Naive thymus-derived CD4-positive, alpha-beta T cell (primary cell): ENCODE measurements at regions of chr22 and their contacts with region 1.

Region 1: GRCh38 chr22:20606041-20606783 is 98.8 kb downstream of the MED15 start:
- DNase-seq: peak; percentile 47 to 74 (median 71)
- ATAC-seq: peak; percentile 90
- H3K4me3 ChIP-seq: no peak overlapping the region
- H3K4me3 Mint-ChIP-seq: peak overlapping the region in 5 of 10 donors; percentile 17 to 69 (median 42)
- H3K27ac ChIP-seq: no peak overlapping the region
- H3K27ac Mint-ChIP-seq: peak overlapping the region in 4 of 9 donors; percentile 22 to 76 (median 29)
- H3K4me1 ChIP-seq: peaks cover 5 to 10% of the 10 kb centered on the region in 2 donors
- H3K4me1 Mint-ChIP-seq: peaks cover 3 to 25% (median 17%) of the 10 kb centered on the region in 7 donors
- H3K27me3 ChIP-seq: no peaks in the 10 kb centered on the region
- H3K27me3 Mint-ChIP-seq: peaks cover 0 to 2% (median 0%) of the 10 kb centered on the region in 5 donors

Region 2: DNA sequence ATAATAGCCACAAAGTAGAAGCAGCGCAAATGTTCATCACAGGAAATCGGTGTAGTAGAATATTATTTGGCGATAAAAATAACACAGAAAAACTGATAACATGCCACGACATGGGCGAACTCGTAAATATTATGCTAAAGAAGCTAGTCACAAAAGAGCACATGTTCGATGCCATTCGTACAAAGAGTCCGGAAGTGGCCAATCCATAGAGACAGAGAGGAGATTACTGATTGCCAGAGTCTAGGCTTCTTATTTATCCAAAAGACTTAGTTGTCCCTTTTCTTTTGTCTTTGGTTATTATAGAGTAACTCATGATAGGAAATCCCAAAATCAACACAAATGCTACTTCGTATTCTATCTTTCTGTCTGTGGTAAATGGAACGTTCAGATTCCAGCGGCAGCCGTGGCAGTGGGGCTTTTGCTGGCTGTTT is 42.3 kb before region 1 on chr22:
- CTCF ChIA-PET with region 1: interaction called, 6 read pairs
- POLR2A ChIA-PET with region 1: interaction called, 3 read pairs
- intact Hi-C with region 1: loop called in 1 of 2 experiments (anchors 1 kb)
- DNase-seq: no peak
- ATAC-seq: no peak
- H3K4me3 ChIP-seq: no peak overlapping the region
- H3K4me3 Mint-ChIP-seq: peak overlapping the region; percentile 7 to 80 (median 50)
- H3K27ac ChIP-seq: no peak overlapping the region
- H3K27ac Mint-ChIP-seq: peak overlapping the region; percentile 22 to 93 (median 82)
- H3K4me1 ChIP-seq: peaks cover 56 to 65% of the 10 kb centered on the region in 2 donors
- H3K4me1 Mint-ChIP-seq: peaks cover 55 to 87% (median 77%) of the 10 kb centered on the region in 7 donors
- H3K27me3 ChIP-seq: no peaks in the 10 kb centered on the region
- H3K27me3 Mint-ChIP-seq: no peaks in the 10 kb centered on the region

Region 3: DNA sequence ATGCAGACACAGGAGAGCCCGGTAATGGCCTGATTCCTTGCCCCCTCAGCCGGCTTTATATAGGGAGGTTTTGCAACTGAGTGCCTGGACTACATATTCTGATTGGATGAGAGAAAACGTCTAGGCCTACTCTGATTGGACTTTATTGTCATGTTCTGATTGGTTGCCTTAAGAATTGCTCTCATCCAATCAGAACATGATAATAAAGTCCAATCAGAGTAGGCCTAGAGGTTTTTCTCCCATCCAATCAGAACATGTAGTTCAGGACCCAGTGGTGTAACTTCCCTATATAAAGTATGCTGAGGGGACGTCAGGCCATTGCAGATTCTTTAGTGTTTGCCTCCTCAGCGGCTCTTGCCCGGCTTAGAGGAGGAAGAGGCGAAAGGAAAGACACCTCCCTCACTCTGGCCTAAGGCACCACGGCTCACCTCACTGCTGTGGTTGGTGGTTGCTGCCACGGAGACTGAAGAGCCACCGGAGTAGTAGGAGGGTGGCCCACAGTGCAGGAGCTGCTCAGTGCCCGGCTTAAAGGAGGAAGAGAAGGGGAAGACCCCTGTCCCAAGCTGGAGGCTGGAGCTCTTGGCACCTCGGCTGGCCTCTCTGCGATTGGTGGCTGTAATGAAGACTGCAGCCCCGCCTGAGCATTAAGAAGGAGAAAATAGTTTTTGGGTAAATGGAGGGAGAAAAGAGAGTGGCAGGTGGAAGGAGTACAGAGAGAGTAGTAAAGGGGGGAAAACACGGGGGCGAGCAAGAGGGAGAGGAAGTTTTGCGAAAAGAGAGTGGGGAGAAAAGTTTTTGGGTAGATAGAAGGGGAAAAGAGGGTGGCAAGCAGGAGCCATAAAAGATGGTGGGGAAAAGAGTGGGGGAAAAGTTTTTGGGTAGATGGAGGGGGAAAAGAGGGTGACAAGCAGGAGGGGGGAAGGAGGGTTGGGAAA is 51.0 kb after region 1 on chr22:
- CTCF ChIA-PET with region 1: no interaction called
- POLR2A ChIA-PET with region 1: no interaction called
- intact Hi-C with region 1: no loop called
- DNase-seq: no peak
- ATAC-seq: no peak
- H3K4me3 ChIP-seq: no peak overlapping the region
- H3K4me3 Mint-ChIP-seq: no peak overlapping the region
- H3K27ac ChIP-seq: no peak overlapping the region
- H3K27ac Mint-ChIP-seq: no peak overlapping the region
- H3K4me1 ChIP-seq: no peaks in the 10 kb centered on the region
- H3K4me1 Mint-ChIP-seq: no peaks in the 10 kb centered on the region
- H3K27me3 ChIP-seq: no peaks in the 10 kb centered on the region
- H3K27me3 Mint-ChIP-seq: peaks cover 0 to 44% (median 6%) of the 10 kb centered on the region in 5 donors

Region 4: GRCh38 chr22:20741634-20742581 is 135.7 kb after region 1 on chr22:
- CTCF ChIA-PET with region 1: interaction called, 3 read pairs
- POLR2A ChIA-PET with region 1: no interaction called
- intact Hi-C with region 1: loop called in 1 of 2 experiments (anchors 5 kb)
- DNase-seq: peak in 8 of 9 donors; percentile 16 to 59 (median 38)
- ATAC-seq: no peak
- H3K4me3 ChIP-seq: no peak overlapping the region
- H3K4me3 Mint-ChIP-seq: no peak overlapping the region
- H3K27ac ChIP-seq: no peak overlapping the region
- H3K27ac Mint-ChIP-seq: peak overlapping the region in 2 of 9 donors; percentile 42 to 45
- H3K4me1 ChIP-seq: no peaks in the 10 kb centered on the region
- H3K4me1 Mint-ChIP-seq: peaks cover 4 to 10% (median 7%) of the 10 kb centered on the region in 7 donors
- H3K27me3 ChIP-seq: no peaks in the 10 kb centered on the region
- H3K27me3 Mint-ChIP-seq: no peaks in the 10 kb centered on the region